GM10248 (cell line): ENCODE measurements at regions of chr6 and their contacts with region 1.

Region 1: DNA sequence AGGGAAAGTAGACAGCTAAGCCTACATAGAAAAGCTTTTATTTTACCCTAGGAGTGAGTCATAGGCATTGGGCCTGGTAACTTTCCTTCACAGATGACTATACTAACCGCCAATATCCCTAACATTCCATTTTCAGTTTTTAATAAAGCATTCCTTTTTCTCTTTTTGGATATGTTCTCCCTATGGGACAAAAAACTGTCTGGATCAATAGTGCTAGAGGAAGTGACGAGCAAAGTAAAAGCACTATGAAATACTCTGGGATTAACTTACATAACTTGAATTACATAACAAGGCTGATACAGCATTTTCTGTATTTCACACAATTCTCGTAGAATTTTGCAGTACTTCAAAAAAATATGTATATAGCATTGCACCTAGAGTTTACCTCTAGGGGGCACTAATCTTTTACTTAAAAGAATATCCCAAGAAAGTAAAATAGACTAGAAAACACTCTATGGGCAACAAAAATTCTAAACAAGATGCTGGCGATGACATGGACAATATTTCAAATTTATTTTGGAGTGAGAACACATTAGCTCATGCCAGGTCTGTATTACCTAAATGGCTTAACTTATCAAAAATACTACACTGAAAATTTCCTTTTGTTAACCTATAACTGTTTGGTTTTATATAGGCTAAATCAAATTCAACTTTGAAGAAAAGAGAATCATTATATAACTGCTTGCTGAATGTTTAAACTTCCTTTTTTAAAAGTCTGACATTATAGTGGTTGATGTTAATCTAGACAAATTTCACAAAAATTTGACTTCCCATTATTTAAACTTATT is 66.3 kb upstream of the DST start:
- DNase-seq: peak; percentile 41
- CTCF ChIP-seq: peak; percentile 43

Region 2: GRCh38 chr6:56693246-56693607 is 15.8 kb before region 1 on chr6:
- CTCF ChIA-PET with region 1: interaction called, 38 read pairs
- POLR2A ChIA-PET with region 1: no interaction called
- DNase-seq: no peak
- CTCF ChIP-seq: no peak

Region 3: GRCh38 chr6:56730663-56731529 is 21.9 kb after region 1 on chr6:
- CTCF ChIA-PET with region 1: interaction called, 36 read pairs
- POLR2A ChIA-PET with region 1: no interaction called
- DNase-seq: no peak
- CTCF ChIP-seq: no peak

Region 4: DNA sequence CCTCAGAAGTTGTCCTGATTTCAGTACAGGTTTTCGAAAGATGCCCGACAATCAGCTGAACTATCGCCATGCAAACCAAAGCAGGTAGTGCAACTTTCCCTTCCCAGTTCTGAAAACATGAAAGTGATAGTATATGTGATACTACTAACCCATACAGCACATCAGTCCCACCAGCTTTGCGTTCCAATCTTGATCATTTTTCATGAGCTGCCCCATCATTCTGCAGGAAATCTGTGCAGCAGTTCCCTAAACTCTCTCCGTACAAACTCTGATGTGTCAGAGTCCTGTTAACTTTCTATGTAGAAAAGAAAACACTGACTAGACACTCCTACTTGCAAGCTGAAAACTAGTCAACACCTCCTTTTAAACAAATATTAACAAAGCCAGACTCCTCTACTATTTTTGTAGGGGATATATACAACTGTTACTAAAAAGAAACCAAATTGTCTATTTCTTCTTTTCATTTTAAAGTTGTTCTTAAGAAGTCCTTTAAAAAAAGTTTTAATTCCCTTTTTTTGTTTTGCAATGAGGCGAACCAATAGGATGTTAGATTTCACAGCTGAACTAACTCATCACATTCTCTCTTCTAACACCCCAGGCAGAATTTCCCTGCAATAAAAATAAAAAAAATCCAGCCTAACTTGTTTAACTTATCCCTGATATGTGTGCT is 33.3 kb after region 1 on chr6:
- CTCF ChIA-PET with region 1: interaction called, 11 read pairs
- POLR2A ChIA-PET with region 1: interaction called, 4 read pairs
- DNase-seq: peak; percentile 18
- CTCF ChIP-seq: no peak

Region 5: DNA sequence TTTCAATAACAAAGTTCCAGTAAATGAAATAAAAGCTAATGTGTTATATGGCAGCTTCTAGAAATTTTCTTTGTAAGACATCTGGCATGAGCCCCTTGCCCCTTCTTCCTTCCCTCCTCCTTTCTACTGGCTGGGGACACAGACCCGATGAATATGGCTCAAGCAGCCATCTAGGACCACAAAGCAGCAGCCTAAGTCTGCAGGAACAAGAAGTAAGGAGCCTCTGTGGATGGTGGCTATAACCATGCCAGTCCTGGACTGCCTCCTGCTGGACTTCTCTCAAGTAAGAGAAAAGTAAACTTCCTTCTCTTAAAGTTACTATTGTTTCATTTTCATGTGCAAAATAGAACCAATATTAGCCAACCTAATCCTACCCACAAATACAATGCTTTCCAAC is 48.6 kb after region 1 on chr6:
- CTCF ChIA-PET with region 1: interaction called, 17 read pairs
- POLR2A ChIA-PET with region 1: no interaction called
- DNase-seq: no peak
- CTCF ChIP-seq: peak; percentile 36

Region 6: GRCh38 chr6:56764081-56764566 is 55.1 kb after region 1 on chr6:
- CTCF ChIA-PET with region 1: interaction called, 17 read pairs
- POLR2A ChIA-PET with region 1: no interaction called
- DNase-seq: peak; percentile 40
- CTCF ChIP-seq: no peak

Region 7: DNA sequence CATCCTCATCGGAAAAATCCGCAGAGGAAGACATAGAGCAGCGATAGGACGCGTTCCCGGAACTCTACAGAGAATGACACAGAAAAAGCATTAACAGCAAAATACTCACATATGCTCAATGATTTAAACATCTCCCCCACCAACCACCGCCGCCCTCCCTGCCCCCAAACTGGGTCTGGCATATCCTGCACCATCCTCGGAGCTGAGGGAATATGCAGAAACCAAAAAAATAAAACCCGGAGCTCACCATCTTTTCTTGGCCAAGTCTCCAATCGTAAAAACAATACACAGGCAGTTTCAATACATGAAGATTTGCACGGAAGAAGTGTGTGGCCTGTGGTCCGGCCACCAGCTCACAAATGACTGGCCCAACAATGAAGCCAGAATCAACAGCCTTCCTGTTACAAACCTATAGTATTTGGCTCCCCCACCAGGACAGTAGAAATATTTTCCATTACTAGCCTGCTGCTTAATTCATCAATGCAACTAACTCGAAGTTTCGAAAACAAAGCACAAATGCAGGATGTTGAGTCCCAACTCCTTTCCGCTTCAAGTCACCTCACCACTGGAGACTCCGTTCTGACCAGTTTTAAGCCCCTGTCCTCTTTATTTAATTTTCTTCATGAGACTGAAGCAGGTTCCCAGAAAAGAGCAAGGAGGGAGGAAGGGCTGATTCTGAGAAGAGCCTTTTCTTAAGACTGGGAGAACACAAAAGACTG is 142.7 kb after region 1 on chr6:
- CTCF ChIA-PET with region 1: interaction called, 63 read pairs
- POLR2A ChIA-PET with region 1: interaction called, 3 read pairs
- DNase-seq: peak; percentile 73
- CTCF ChIP-seq: peak; percentile 67